PC-9 (cell line): ENCODE measurements at regions of chr10 and their contacts with region 1.

Region 1: GRCh38 chr10:86821388-86821999 is 65.1 kb downstream of the BMPR1A start:
- DNase-seq: no peak
- H3K4me3 ChIP-seq: no peak overlapping the region
- H3K27ac ChIP-seq: no peak overlapping the region
- H3K4me1 ChIP-seq: no peaks in the 10 kb centered on the region
- H3K27me3 ChIP-seq: no peaks in the 10 kb centered on the region
- CTCF ChIP-seq: no peak

Region 2: DNA sequence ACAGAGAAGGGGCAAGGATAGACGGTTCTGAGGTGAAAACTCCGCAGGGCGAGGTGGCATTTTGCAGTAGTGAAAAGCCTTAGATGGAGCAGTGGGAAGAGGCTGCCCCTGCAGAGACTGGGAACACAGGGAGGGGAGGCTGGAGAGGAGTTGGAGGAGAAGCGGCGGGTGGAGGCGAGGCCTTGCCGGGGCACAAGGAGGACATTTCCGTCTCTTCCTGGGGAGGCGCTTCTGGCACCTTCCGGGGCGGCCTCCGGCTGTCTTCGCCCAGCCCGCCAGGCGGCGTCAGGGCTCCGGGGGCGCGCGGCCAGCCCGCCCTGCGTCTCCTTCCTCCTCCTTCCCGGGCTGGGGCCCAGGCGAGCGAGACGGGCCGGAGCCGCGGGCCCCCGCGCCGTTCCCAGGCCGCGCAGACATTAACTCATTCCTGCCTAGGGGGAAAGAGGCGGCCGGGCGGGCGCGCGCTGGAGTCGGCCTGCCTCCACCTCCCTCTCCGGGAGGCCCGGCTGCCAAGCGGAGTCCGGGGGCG is 110.4 kb before region 1 on chr10:
- CTCF ChIA-PET with region 1: no interaction called
- POLR2A ChIA-PET with region 1: no interaction called
- intact Hi-C with region 1: loop called (anchors 10 kb)
- DNase-seq: peak; percentile 56 to 85
- H3K4me3 ChIP-seq: peak overlapping the region; percentile 78; the same call in 1 of the 2 replicates
- H3K27ac ChIP-seq: peak overlapping the region; percentile 34; the same call in 1 of the 2 replicates
- H3K4me1 ChIP-seq: no peaks in the 10 kb centered on the region
- H3K27me3 ChIP-seq: no peaks in the 10 kb centered on the region
- CTCF ChIP-seq: peak; percentile 70